ENCODE measurements at regions of chr10 and their contacts with region 1.

Region 1: DNA sequence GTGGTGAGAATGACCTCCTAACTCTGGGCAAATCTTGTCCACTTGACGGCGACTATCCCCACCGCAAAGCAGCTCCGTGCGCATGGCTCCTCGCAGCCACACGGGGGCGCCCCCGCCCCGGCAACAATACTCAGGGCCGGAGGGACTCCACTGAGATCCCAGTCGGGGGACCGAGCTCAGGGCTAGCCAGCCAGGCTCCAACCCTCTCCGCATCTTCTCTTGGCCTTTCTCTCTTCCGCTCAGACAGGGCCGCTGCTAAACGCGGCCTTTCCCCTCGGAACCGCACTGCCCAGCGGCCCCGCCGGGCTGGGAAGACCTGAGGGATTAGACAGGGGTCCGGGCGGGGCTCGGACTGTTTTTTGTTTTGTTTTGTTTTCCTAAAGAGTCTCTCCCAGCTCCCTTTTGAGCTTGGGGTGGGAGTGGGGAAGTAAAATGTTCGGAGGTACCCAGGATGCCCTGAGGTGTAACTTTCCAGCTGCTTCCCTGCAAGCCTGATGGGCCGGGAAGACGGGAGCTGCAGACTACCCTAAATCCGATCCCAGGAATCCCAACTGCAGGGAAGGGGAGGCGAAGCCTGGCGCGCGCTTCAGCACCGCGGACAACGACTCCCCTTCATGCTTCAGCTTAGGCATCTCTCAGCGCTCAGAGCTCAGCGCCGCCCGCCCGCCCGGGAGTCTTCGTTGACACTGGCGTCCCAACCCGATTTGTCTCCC is 2.7 kb downstream of the KCNIP2 start:
- DNase-seq: peak; percentile 72
- ATAC-seq: peak; percentile 73
- H3K4me3 ChIP-seq: peak overlapping the region; percentile 48 to 60
- H3K27ac ChIP-seq: peak overlapping the region; percentile 4
- H3K4me1 ChIP-seq: peaks cover 14 to 32% of the 10 kb centered on the region in 2 experiments
- H3K27me3 ChIP-seq: no peaks in the 10 kb centered on the region
- CTCF ChIP-seq: peak in 2 of 3 experiments; percentile 100; a peak in 4 of 6 replicates
- POLR2A ChIP-seq: no peak
- RAD21 ChIP-seq: no peak

Region 2: GRCh38 chr10:101214446-101215396 is 626.2 kb before region 1 on chr10:
- CTCF ChIA-PET with region 1: interaction called, 16 read pairs
- POLR2A ChIA-PET with region 1: no interaction called
- RAD21 ChIA-PET with region 1: no interaction called
- intact Hi-C with region 1: loop called (anchors 5 kb)
- DNase-seq: peak; percentile 66
- ATAC-seq: peak; percentile 82
- H3K4me3 ChIP-seq: peak overlapping the region; percentile 55 to 63
- H3K27ac ChIP-seq: no peak overlapping the region
- H3K4me1 ChIP-seq: peaks cover 7 to 17% of the 10 kb centered on the region in 2 experiments; a peak in 2 of 4 replicates
- H3K27me3 ChIP-seq: 0 out of 2 replicates have a peak, but pooled peaks cover 3% of the 10 kb centered on the region
- CTCF ChIP-seq: peak; percentile 96 to 98 (median 97)
- POLR2A ChIP-seq: no peak
- RAD21 ChIP-seq: peak; percentile 99

Region 3: GRCh38 chr10:101397140-101397539 is 443.8 kb before region 1 on chr10:
- CTCF ChIA-PET with region 1: no interaction called
- POLR2A ChIA-PET with region 1: no interaction called
- RAD21 ChIA-PET with region 1: no interaction called
- intact Hi-C with region 1: no loop called
- DNase-seq: peak; percentile 6
- ATAC-seq: no peak
- H3K4me3 ChIP-seq: no peak overlapping the region
- H3K27ac ChIP-seq: no peak overlapping the region
- H3K4me1 ChIP-seq: no peaks in the 10 kb centered on the region
- H3K27me3 ChIP-seq: no peaks in the 10 kb centered on the region
- CTCF ChIP-seq: no peak
- POLR2A ChIP-seq: no peak
- RAD21 ChIP-seq: no peak

Region 4: DNA sequence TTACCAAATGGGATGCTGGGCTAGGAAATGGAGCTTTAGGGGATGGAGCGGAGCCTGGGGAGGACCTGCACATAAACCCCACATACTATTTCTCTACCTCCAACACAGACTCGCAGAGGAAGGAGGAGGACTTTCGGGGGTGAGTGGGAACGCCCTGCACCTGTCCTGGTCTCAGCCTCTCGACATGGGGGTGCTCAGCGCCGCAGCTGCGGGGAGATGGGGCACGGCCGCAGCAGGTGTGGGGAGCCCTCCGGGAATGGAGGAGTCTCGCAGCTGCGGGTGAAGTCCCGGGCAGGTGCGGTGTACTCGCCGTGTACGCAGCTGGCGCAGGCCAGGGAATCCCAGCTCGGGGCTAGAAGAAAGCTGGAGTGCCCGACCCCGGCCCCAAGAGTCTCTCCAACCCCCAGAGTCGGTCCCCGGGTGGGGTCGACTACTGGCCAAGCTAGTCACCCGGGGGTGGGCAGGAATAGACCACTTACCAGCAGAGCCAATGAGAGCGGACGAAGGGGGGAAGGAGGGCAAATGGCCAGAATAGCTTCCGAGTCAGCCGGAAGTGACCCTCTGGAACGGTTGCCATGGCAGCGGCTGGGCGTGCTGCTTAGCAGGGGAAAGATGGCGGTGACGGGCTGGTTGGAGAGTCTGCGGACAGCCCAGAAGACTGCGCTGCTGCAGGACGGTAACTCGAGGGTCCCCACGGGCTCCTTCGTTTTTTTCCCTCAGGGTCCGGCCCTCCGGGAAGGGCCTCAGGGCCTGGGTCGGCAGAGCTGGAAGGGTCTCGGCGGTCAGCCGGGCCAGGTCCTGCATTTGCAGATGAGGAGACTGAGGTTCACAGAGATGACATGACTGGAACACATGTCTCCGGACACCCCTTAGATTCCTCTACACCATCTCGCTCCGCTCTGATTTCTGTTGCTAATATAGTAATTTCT is 252.9 kb before region 1 on chr10 and contains the starts of genes DPCD and POLL:
- CTCF ChIA-PET with region 1: no interaction called
- POLR2A ChIA-PET with region 1: no interaction called
- RAD21 ChIA-PET with region 1: no interaction called
- intact Hi-C with region 1: no loop called
- DNase-seq: peak; percentile 91
- ATAC-seq: peak; percentile 92
- H3K4me3 ChIP-seq: peak within 1 kb of the TSS; percentile 89 to 94
- H3K27ac ChIP-seq: peak within 1 kb of the TSS; percentile 63
- H3K4me1 ChIP-seq: peaks cover 10 to 16% of the 10 kb centered on the region in 2 experiments; a peak in 3 of 4 replicates
- H3K27me3 ChIP-seq: no peaks in the 10 kb centered on the region
- CTCF ChIP-seq: no peak
- POLR2A ChIP-seq: peak; percentile 75
- RAD21 ChIP-seq: no peak
- total RNA-seq, gene DPCD: 39.5 TPM
- total RNA-seq, gene POLL: 51.3 TPM

Region 5: DNA sequence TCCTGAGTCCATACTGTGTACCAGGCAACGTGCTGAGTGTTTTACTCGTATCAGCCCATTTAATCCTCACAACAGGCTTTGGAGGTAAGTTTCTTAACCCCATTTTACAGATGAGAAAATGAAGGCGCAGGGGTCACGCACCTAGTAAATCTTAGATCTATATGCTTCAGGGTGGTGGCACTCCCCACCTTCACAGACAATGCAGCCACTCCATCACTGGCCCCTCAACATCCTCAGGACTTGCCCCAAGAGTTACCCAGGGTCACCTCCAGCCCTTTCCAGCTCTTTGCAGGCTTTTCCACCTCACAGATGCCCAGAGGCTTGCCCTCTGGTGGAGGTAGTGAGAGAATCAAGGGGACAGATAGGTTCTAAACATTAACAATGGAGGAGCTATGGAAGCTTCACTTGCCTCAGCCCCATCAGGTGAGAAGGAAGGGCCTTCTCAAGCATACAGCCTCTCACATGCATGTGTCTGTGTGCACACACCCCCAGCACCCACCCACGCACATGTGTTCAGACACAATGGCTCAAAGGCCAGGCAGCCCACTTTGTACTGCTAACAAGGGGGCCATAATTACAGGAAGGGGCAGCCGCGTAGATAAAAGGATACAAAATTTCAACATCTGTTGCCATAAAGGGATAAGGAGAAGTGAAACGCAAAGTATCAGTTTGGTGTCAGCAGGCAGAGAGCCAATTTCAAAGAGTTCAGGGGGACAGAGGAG is 223.6 kb before region 1 on chr10:
- CTCF ChIA-PET with region 1: no interaction called
- POLR2A ChIA-PET with region 1: no interaction called
- RAD21 ChIA-PET with region 1: no interaction called
- intact Hi-C with region 1: no loop called
- DNase-seq: no peak
- ATAC-seq: peak; percentile 76
- H3K4me3 ChIP-seq: no peak overlapping the region
- H3K27ac ChIP-seq: no peak overlapping the region
- H3K4me1 ChIP-seq: no peaks in the 10 kb centered on the region
- H3K27me3 ChIP-seq: no peaks in the 10 kb centered on the region
- CTCF ChIP-seq: peak; percentile 14 to 37 (median 22); a peak in 3 of 6 replicates
- POLR2A ChIP-seq: no peak
- RAD21 ChIP-seq: no peak

Region 6: GRCh38 chr10:101818119-101818871 is 22.6 kb before region 1 on chr10 and contains the start of gene OGA:
- CTCF ChIA-PET with region 1: interaction called, 19 read pairs
- POLR2A ChIA-PET with region 1: interaction called, 10 read pairs
- RAD21 ChIA-PET with region 1: interaction called, 6 to 8 read pairs
- intact Hi-C with region 1: no loop called
- DNase-seq: peak; percentile 100
- ATAC-seq: peak; percentile 91
- H3K4me3 ChIP-seq: peak within 1 kb of the TSS; percentile 87 to 96
- H3K27ac ChIP-seq: peak within 1 kb of the TSS; percentile 81
- H3K4me1 ChIP-seq: peaks cover 18 to 31% of the 10 kb centered on the region in 2 experiments
- H3K27me3 ChIP-seq: no peaks in the 10 kb centered on the region
- CTCF ChIP-seq: no peak
- POLR2A ChIP-seq: peak; percentile 90
- RAD21 ChIP-seq: no peak
- total RNA-seq, gene OGA: 127 TPM

Region 7: GRCh38 chr10:101897633-101898032 is 56.7 kb after region 1 on chr10:
- CTCF ChIA-PET with region 1: interaction called, 12 read pairs
- POLR2A ChIA-PET with region 1: no interaction called
- RAD21 ChIA-PET with region 1: no interaction called
- intact Hi-C with region 1: no loop called
- DNase-seq: no peak
- ATAC-seq: no peak
- H3K4me3 ChIP-seq: no peak overlapping the region
- H3K27ac ChIP-seq: no peak overlapping the region
- H3K4me1 ChIP-seq: peaks cover 0 to 12% of the 10 kb centered on the region in 2 experiments; a peak in 2 of 4 replicates
- H3K27me3 ChIP-seq: no peaks in the 10 kb centered on the region
- CTCF ChIP-seq: no peak
- POLR2A ChIP-seq: no peak
- RAD21 ChIP-seq: no peak

Region 8: DNA sequence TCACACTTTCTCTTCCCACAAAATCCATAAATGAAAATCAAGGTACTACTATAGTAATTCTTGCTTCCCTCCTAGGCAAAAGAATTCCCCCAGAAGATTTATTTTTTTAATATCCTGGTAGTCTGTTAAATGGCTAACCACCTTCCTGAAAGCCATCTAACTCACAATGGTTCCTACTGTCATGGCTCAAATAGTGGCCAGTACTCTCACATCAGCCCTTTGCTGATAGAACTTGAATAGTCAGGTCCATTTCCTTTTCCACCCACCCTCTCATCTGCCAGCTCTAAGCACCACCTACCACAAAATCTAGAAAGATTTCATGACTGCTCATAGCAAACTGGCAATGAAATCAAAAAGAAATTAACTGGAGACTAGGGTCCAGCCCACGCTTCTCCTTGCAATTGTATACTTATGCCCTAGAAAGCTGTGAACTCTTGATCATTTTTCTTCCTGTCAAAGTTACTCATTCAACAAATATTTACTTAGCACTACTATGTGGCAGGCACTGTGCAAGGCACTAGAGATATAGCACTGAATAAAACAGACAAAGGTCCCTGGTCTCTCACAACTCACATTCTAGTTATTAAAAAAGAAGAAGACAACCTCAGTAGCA is 154.7 kb after region 1 on chr10:
- CTCF ChIA-PET with region 1: interaction called, 17 read pairs
- POLR2A ChIA-PET with region 1: no interaction called
- RAD21 ChIA-PET with region 1: interaction called in 1 of 2 experiments, 4 read pairs
- intact Hi-C with region 1: no loop called
- DNase-seq: no peak
- ATAC-seq: no peak
- H3K4me3 ChIP-seq: no peak overlapping the region
- H3K27ac ChIP-seq: no peak overlapping the region
- H3K4me1 ChIP-seq: peaks cover 7 to 17% of the 10 kb centered on the region in 2 experiments; a peak in 3 of 4 replicates
- H3K27me3 ChIP-seq: no peaks in the 10 kb centered on the region
- CTCF ChIP-seq: no peak
- POLR2A ChIP-seq: no peak
- RAD21 ChIP-seq: no peak

Region 9: GRCh38 chr10:102055647-102056419 is 214.9 kb after region 1 on chr10 and contains the start of gene ARMH3:
- CTCF ChIA-PET with region 1: interaction called, 10 read pairs
- POLR2A ChIA-PET with region 1: interaction called, 3 read pairs
- RAD21 ChIA-PET with region 1: no interaction called
- intact Hi-C with region 1: loop called (anchors 5 kb)
- DNase-seq: peak; percentile 99
- ATAC-seq: peak; percentile 85
- H3K4me3 ChIP-seq: peak within 1 kb of the TSS; percentile 77 to 91
- H3K27ac ChIP-seq: peak within 1 kb of the TSS; percentile 90
- H3K4me1 ChIP-seq: peaks cover 40 to 52% of the 10 kb centered on the region in 2 experiments
- H3K27me3 ChIP-seq: no peaks in the 10 kb centered on the region
- CTCF ChIP-seq: no peak
- POLR2A ChIP-seq: peak; percentile 84
- RAD21 ChIP-seq: no peak
- total RNA-seq, gene ARMH3: 30.4 TPM

Region 10: DNA sequence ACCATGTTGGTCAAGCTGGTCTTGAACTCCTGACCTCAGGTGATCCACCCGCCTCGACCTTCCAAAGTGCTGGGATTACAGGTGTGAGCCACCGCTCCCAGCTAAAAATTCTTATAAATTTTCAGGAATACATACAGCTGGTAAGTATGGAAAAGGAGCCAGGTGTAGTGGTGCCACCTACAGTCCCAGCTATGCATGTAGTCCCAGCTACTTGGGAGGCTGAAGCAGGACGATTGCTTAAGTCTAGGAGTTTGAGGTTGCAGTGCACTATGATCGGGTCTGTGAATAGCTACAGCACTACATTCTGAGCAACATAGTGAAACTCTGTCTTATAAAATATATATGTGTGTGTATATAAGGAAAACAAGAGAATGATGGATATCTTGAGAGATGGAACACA is 260.3 kb after region 1 on chr10:
- CTCF ChIA-PET with region 1: interaction called, 27 read pairs
- POLR2A ChIA-PET with region 1: no interaction called
- RAD21 ChIA-PET with region 1: no interaction called
- intact Hi-C with region 1: no loop called
- DNase-seq: peak; percentile 39
- ATAC-seq: peak; percentile 93
- H3K4me3 ChIP-seq: no peak overlapping the region
- H3K27ac ChIP-seq: no peak overlapping the region
- H3K4me1 ChIP-seq: no peaks in the 10 kb centered on the region
- H3K27me3 ChIP-seq: no peaks in the 10 kb centered on the region
- CTCF ChIP-seq: peak; percentile 52 to 71 (median 53); a peak in 5 of 6 replicates
- POLR2A ChIP-seq: no peak
- RAD21 ChIP-seq: peak; percentile 69